ENCODE measurements at regions of chr15 and their contacts with region 1.

Region 1: DNA sequence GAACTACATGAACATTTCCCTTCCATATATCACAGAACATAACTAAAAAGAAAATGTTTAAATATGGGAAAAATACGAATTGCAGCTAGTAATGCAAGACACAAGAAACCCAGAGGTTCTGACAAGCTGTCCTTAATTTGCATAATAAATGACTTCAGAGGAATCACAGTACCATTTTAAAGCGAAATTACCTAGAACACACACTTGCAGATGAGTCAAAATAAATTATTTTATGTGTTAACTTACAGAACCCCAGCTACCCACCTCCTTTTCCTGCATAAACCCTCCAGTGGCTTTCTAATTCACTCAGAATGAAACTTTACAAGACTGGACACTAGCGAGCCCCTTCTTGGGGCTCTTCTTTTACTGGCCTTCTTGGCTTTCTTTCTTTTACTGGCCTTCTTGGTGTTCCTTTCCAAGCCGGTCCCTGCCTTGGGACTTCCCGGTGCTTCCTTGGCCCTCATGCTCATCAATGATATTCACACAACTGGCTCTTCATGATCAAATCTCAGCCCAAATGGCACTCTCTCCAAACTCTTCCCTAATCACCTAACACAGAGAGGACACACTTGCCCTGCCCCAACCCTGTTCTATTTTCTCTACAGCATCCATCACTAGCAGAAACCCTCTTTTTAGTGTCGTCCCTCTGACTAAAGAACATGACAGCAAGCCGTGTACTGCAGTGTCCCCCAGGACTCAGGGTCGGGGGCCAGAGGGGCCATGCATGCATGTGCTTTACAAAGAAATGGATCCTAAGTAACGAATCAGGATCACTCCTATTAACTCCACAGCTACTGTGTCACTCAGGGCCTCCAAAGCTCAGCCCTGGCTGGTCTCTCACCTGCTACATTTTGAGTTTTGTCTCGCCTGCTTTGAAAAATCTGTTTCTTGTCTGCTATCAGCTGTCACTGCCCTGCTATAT is 4.8 kb downstream of the CHSY1 start:
- DNase-seq: no peak
- ATAC-seq: no peak

Region 2: DNA sequence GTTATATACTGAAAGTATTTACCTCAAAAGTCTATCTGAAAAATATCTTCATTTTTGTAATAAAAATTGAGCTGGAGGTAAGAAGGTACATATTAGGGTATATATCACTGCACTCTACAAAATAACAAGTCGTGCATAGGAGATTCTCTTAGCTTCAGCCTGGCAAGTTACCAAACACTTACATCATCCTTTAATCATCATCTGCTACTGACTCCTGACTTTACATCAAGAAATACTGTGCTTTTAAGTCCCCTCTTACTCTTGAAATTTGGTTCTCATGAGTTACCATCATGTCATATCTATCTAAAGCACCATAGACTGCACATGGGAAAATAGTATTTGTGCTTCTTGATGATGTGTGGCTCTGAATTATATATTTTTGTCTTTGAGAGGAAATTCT is 1564.6 kb before region 1 on chr15:
- intact Hi-C with region 1: loop called (anchors 5 kb)
- DNase-seq: no peak
- ATAC-seq: no peak

Measured in sciatic nerve (tissue), 2 donors.